CD8-positive, alpha-beta T cell (primary cell): ENCODE measurements at regions of chr11 and their contacts with region 1.

Region 1: GRCh38 chr11:112024773-112025678 is at the start of gene DLAT:
- DNase-seq: peak; percentile 61 to 90 (median 84)
- ATAC-seq: peak; percentile 89
- H3K4me3 ChIP-seq: peak within 1 kb of the TSS; percentile 87 to 95
- H3K4me3 Mint-ChIP-seq: peak within 1 kb of the TSS; percentile 100
- H3K27ac ChIP-seq: peak within 1 kb of the TSS; percentile 68 to 78
- H3K27ac Mint-ChIP-seq: peak within 1 kb of the TSS; percentile 98
- H3K4me1 ChIP-seq: peaks cover 21% of the 10 kb centered on the region
- H3K4me1 Mint-ChIP-seq: peaks cover 27% of the 10 kb centered on the region
- H3K27me3 ChIP-seq: no peaks in the 10 kb centered on the region
- H3K27me3 Mint-ChIP-seq: no peaks in the 10 kb centered on the region
- CTCF ChIP-seq: no peak
- total RNA-seq, gene DLAT: 14.5 to 14.7 TPM

Region 2: GRCh38 chr11:112074026-112074811 is 49.2 kb after region 1 on chr11 and contains the start of gene NKAPD1:
- CTCF ChIA-PET with region 1: no interaction called
- POLR2A ChIA-PET with region 1: interaction called, 4 read pairs
- intact Hi-C with region 1: loop called (anchors 2 kb)
- DNase-seq: peak; percentile 64 to 92 (median 82)
- ATAC-seq: peak; percentile 79
- H3K4me3 ChIP-seq: peak within 1 kb of the TSS; percentile 79 to 87
- H3K4me3 Mint-ChIP-seq: peak within 1 kb of the TSS; percentile 96
- H3K27ac ChIP-seq: peak within 1 kb of the TSS; percentile 70 to 80
- H3K27ac Mint-ChIP-seq: peak within 1 kb of the TSS; percentile 95
- H3K4me1 ChIP-seq: peaks cover 12% of the 10 kb centered on the region
- H3K4me1 Mint-ChIP-seq: peaks cover 33% of the 10 kb centered on the region
- H3K27me3 ChIP-seq: no peaks in the 10 kb centered on the region
- H3K27me3 Mint-ChIP-seq: peaks cover 7% of the 10 kb centered on the region
- CTCF ChIP-seq: no peak
- total RNA-seq, gene NKAPD1: 16.3 to 17.0 TPM

Region 3: GRCh38 chr11:112128483-112129121 is 103.6 kb after region 1 on chr11:
- CTCF ChIA-PET with region 1: no interaction called
- POLR2A ChIA-PET with region 1: no interaction called
- intact Hi-C with region 1: no loop called
- DNase-seq: no peak
- ATAC-seq: no peak
- H3K4me3 ChIP-seq: no peak overlapping the region
- H3K4me3 Mint-ChIP-seq: no peak overlapping the region
- H3K27ac ChIP-seq: no peak overlapping the region
- H3K27ac Mint-ChIP-seq: no peak overlapping the region
- H3K4me1 ChIP-seq: no peaks in the 10 kb centered on the region
- H3K4me1 Mint-ChIP-seq: no peaks in the 10 kb centered on the region
- H3K27me3 ChIP-seq: no peaks in the 10 kb centered on the region
- H3K27me3 Mint-ChIP-seq: no peaks in the 10 kb centered on the region
- CTCF ChIP-seq: no peak